Body of pancreas (tissue), 4 donors: ENCODE measurements at regions of chr7 and their contacts with region 1.

Region 1: DNA sequence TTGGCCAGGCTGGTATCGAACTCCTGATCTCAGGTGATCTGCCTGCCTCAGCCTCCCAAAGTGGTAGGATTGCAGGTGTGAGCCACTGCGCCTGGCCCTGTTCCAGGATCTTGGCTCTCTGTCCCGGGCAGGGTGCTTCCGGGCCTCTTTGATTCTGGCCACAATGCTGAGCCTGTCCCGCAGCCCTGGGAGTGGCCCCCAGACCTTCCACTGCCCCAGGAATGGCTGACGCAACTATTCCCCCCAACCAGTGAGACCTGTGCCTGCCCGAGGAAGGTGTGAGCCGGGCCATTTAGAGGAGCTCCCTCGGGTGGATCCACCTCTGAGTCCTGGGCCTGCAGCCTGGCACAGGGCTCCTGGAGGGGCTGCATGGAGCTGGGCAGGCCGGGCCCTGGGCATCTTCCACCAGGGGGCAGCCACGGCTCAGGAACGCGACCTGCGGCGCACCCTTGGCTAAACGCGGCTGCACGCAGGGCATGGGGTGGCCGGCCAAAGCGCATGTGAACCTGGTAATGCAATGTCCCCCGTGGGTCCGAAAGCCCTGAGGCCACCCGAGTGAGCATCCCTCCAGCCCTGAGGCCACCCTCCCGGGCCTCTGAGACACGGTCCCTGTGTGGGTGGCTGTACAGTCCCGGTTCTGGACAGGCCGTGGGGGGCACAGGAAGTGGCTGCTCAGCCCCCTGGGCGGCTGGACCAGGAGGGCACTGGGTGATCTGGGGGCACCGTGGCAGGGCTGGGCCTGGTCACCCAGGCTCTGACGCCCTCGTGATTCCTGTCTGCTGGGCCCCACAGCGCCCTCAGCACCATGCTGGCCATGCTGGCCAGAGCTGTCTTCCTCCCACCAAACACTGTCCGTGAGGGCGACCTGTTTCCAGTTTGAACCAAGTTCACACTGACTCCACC is 24.8 kb downstream of the GRIFIN start:
- DNase-seq: peak; percentile 84 to 90 (median 88)
- ATAC-seq: peak; percentile 96
- H3K4me3 ChIP-seq: no peak overlapping the region
- H3K27ac ChIP-seq: no peak overlapping the region
- H3K4me1 ChIP-seq: peaks cover 13% of the 10 kb centered on the region
- H3K27me3 ChIP-seq: no peaks in the 10 kb centered on the region
- CTCF ChIP-seq: peak; percentile 79 to 92 (median 88)
- POLR2A ChIP-seq: no peak

Region 2: DNA sequence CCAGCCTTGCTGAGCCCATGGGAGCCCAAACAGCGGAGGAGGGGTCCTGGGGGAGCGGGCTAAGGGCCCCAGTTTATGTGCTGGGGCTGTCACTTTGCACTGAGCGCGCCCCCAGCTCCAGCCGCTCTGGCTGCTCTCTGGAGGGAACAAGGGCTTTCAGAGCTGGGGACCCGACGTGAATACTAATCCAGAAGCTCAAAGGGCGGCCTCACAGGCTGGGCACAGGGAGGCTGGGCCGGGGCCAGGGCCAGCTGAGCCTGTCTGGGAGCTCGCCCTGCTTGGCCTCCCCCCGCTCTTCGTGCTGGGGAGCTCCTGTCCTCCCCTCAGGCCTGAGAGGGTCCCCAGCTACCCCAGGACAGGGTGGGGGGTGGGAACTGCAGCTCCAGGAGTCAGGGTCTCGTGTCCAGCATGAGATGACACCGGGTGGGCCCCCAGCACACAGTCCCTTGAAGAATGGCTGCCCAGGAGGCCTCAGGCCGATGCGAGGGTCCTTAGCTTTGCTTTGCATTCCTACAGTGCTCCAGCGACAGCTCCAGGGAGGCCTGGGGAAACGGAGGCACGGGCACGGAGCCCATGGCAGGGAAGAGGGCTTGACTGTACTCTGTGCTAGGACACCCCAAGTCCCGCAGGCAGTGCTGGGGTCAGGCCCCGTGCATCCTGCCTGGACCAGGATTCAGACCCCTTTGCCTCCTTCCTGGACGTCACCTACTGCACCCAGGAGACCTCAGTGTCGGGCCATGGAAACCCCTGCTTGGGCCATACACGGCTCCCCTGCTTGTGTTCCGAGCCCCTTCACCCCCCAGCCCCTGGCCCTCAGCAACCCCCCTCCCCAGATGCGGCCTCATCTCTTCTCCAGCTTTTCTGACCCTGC is 230.7 kb after region 1 on chr7:
- intact Hi-C with region 1: loop called (anchors 2 kb)
- DNase-seq: no peak
- ATAC-seq: no peak
- H3K4me3 ChIP-seq: no peak overlapping the region
- H3K27ac ChIP-seq: no peak overlapping the region
- H3K4me1 ChIP-seq: no peaks in the 10 kb centered on the region
- H3K27me3 ChIP-seq: no peaks in the 10 kb centered on the region
- CTCF ChIP-seq: no peak
- POLR2A ChIP-seq: no peak